ENCODE measurements at regions of chr11 and their contacts with region 1.

Region 1: GRCh38 chr11:61792310-61793085 is at the starts of genes FEN1 and TMEM258:
- DNase-seq: peak; percentile 96
- ATAC-seq: peak; percentile 91
- H3K4me3 ChIP-seq: peak within 1 kb of the TSS; percentile 80 to 94 (median 88)
- H3K4me3 Mint-ChIP-seq: peak within 1 kb of the TSS; percentile 93
- H3K27ac ChIP-seq: peak within 1 kb of the TSS; percentile 92 to 96
- H3K27ac Mint-ChIP-seq: peak within 1 kb of the TSS; percentile 97
- H3K4me1 ChIP-seq: peaks cover 11 to 23% of the 10 kb centered on the region in 2 donors
- H3K4me1 Mint-ChIP-seq: peaks cover 34% of the 10 kb centered on the region
- H3K27me3 ChIP-seq: no peaks in the 10 kb centered on the region
- H3K27me3 Mint-ChIP-seq: no peaks in the 10 kb centered on the region
- CTCF ChIP-seq: no peak
- total RNA-seq, gene FEN1: 9.2 and 9.8 TPM in 2 replicates
- total RNA-seq, gene TMEM258: 64.6 and 65.8 TPM in 2 replicates

Region 2: DNA sequence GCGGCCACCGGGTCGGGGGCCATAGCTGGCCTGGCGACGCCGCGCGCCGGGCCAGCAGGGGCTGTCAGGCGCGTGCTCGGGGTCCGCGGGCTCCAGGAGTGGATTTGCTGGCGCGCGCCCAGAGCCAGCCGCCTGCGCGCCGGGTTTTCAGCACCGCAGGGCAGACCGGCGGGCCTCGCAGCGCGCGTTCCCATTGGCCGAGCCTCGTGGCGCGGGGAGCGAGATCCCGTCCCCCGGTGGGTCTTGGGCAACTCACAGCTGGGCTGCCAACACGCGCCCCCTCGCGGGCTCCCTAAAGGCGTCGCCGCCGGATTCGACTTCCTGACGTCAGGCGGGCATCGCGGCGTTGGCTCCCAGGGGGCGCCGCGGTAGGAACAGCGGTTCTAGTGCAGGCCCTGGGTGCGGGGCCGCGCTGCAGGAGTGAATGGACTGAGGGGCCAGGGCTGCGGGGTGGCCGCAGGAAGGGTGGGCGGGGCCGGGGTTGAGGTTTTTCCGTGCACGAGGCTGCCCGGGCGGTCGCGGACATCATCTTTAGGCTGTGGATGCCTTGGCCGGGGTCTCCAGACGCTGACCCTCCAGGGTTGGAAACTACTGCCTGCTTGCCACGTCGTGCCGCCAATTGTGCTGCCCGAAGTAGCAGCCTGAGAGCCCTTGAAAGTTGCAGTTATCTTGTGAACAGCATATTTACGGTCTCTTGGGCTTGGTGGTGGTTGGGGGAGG is 24.4 kb after region 1 on chr11 and contains the start of gene FADS1:
- CTCF ChIA-PET with region 1: interaction called, 77 read pairs
- POLR2A ChIA-PET with region 1: interaction called, 4 read pairs
- intact Hi-C with region 1: loop called (anchors 1 kb)
- DNase-seq: peak; percentile 83
- ATAC-seq: peak; percentile 65
- H3K4me3 ChIP-seq: peak within 1 kb of the TSS; percentile 56 to 77 (median 70)
- H3K4me3 Mint-ChIP-seq: peak within 1 kb of the TSS; percentile 96
- H3K27ac ChIP-seq: no peak within 1 kb of the TSS
- H3K27ac Mint-ChIP-seq: peak within 1 kb of the TSS; percentile 83
- H3K4me1 ChIP-seq: peaks cover 9 to 24% of the 10 kb centered on the region in 2 donors
- H3K4me1 Mint-ChIP-seq: peaks cover 15% of the 10 kb centered on the region
- H3K27me3 ChIP-seq: peaks cover 0 to 17% (median 4%) of the 10 kb centered on the region in 4 experiments
- H3K27me3 Mint-ChIP-seq: no peaks in the 10 kb centered on the region
- CTCF ChIP-seq: peak; percentile 53
- total RNA-seq, gene FADS1: 14.8 and 15.6 TPM in 2 replicates

Region 3: DNA sequence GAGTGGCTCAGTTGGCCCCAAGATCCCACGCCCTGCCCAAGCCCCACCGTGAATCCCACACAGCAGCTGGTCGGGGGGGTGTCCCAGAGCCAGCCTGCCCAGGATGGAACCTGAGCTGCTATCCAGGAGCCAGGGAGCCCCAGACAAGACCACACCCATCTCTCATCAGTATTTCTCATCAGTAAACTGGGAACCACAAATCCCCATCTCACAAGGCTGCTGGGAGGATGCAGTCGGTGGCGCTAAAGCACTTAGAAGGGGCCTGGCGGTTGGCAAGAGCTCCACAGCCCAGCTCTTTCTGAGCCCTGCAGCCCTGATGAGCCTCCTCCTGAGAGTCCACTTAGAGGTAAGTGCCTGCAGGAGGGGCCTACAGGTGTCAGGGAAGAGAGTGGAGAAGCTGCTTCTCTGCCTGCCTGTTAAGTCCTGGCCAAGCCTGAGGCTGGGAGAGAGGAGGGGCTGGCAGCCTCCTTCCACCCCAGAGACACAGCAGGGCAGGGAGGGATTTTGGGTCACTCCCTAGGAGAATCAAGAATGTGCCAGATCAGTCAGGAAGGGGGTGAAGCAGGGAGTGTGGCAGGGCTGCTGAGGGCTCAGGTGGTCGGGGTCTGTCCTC is 92.8 kb after region 1 on chr11:
- CTCF ChIA-PET with region 1: interaction called, 13 read pairs
- POLR2A ChIA-PET with region 1: interaction called, 4 read pairs
- intact Hi-C with region 1: no loop called
- DNase-seq: no peak
- ATAC-seq: no peak
- H3K4me3 ChIP-seq: no peak overlapping the region
- H3K4me3 Mint-ChIP-seq: no peak overlapping the region
- H3K27ac ChIP-seq: no peak overlapping the region
- H3K27ac Mint-ChIP-seq: no peak overlapping the region
- H3K4me1 ChIP-seq: peaks cover 21 to 48% of the 10 kb centered on the region in 2 donors
- H3K4me1 Mint-ChIP-seq: peaks cover 49% of the 10 kb centered on the region
- H3K27me3 ChIP-seq: no peaks in the 10 kb centered on the region
- H3K27me3 Mint-ChIP-seq: no peaks in the 10 kb centered on the region
- CTCF ChIP-seq: no peak

Region 4: GRCh38 chr11:61899146-61899841 is 106.8 kb after region 1 on chr11:
- CTCF ChIA-PET with region 1: interaction called, 71 read pairs
- POLR2A ChIA-PET with region 1: no interaction called
- intact Hi-C with region 1: loop called (anchors 1 kb)
- DNase-seq: peak; percentile 96
- ATAC-seq: peak; percentile 96
- H3K4me3 ChIP-seq: no peak overlapping the region
- H3K4me3 Mint-ChIP-seq: peak overlapping the region; percentile 41
- H3K27ac ChIP-seq: peak overlapping the region in 1 of 2 donors; percentile 33
- H3K27ac Mint-ChIP-seq: peak overlapping the region; percentile 85
- H3K4me1 ChIP-seq: peaks cover 21 to 31% of the 10 kb centered on the region in 2 donors
- H3K4me1 Mint-ChIP-seq: peaks cover 26% of the 10 kb centered on the region
- H3K27me3 ChIP-seq: peaks cover 0 to 3% (median 2%) of the 10 kb centered on the region in 4 experiments
- H3K27me3 Mint-ChIP-seq: peaks cover 4% of the 10 kb centered on the region
- CTCF ChIP-seq: peak; percentile 100

Region 5: GRCh38 chr11:61967116-61967923 is 174.8 kb after region 1 on chr11 and contains the start of gene FTH1:
- CTCF ChIA-PET with region 1: interaction called, 10 read pairs
- POLR2A ChIA-PET with region 1: interaction called, 3 read pairs
- intact Hi-C with region 1: loop called (anchors 1 kb)
- DNase-seq: peak; percentile 95
- ATAC-seq: peak; percentile 67
- H3K4me3 ChIP-seq: peak within 1 kb of the TSS; percentile 88 to 99 (median 96)
- H3K4me3 Mint-ChIP-seq: peak within 1 kb of the TSS; percentile 97
- H3K27ac ChIP-seq: peak within 1 kb of the TSS; percentile 86 to 94
- H3K27ac Mint-ChIP-seq: peak within 1 kb of the TSS; percentile 99
- H3K4me1 ChIP-seq: peaks cover 58 to 67% of the 10 kb centered on the region in 2 donors
- H3K4me1 Mint-ChIP-seq: peaks cover 72% of the 10 kb centered on the region
- H3K27me3 ChIP-seq: no peaks in the 10 kb centered on the region
- H3K27me3 Mint-ChIP-seq: no peaks in the 10 kb centered on the region
- CTCF ChIP-seq: no peak
- total RNA-seq, gene FTH1: 1,265 and 1,314 TPM in 2 replicates

Region 6: DNA sequence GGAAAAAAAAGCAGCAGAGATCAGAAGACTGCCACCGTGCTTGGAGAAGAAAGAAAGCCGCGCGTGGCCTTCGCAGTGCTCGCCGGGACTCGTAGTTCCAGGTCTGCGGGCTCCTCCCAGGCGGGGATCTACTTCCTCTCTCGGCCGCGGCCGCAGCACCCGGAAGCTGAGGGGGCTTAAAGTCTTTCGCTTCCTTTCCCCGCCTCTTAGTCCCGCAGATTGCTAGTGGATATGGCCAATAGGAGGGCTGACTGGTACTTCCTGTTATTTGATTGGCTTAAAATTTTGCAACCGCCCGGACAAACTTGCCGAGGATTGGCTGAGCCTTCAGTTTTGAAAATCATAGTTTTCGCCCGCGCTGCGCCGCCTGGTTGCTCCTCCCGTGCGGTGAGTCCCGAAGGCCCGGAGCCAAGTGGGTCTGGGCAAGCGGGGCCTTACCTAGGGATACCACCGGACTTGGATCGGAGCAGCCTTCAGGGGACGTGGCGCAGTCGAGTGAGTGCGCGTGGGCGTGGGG is 331.2 kb after region 1 on chr11 and contains the start of gene INCENP:
- CTCF ChIA-PET with region 1: interaction called, 7 read pairs
- POLR2A ChIA-PET with region 1: interaction called, 6 read pairs
- intact Hi-C with region 1: loop called (anchors 1 kb)
- DNase-seq: peak; percentile 97
- ATAC-seq: peak; percentile 99
- H3K4me3 ChIP-seq: peak within 1 kb of the TSS; percentile 71 to 99 (median 93)
- H3K4me3 Mint-ChIP-seq: peak within 1 kb of the TSS; percentile 94
- H3K27ac ChIP-seq: peak within 1 kb of the TSS; percentile 52 to 67
- H3K27ac Mint-ChIP-seq: peak within 1 kb of the TSS; percentile 88
- H3K4me1 ChIP-seq: peaks cover 11 to 16% of the 10 kb centered on the region in 2 donors
- H3K4me1 Mint-ChIP-seq: peaks cover 30% of the 10 kb centered on the region
- H3K27me3 ChIP-seq: peaks cover 0 to 2% (median 0%) of the 10 kb centered on the region in 4 experiments
- H3K27me3 Mint-ChIP-seq: no peaks in the 10 kb centered on the region
- CTCF ChIP-seq: no peak
- total RNA-seq, gene INCENP: 34.0 and 37.8 TPM in 2 replicates

Measured in B cell (primary cell).